Activated T-helper 2 cell treated with anti-CD3 and anti-CD28 coated beads, Interferon-gamma antibody, Interleukin-2, Interleukin-4, amounts not matched to agents 10 μg/mL and 5 μg/mL and 100 μg/mL, durations not matched to agents 14 hours and 24 hours and 36 hours (primary cell): ENCODE measurements at regions of chrX and their contacts with region 1.

Region 1: DNA sequence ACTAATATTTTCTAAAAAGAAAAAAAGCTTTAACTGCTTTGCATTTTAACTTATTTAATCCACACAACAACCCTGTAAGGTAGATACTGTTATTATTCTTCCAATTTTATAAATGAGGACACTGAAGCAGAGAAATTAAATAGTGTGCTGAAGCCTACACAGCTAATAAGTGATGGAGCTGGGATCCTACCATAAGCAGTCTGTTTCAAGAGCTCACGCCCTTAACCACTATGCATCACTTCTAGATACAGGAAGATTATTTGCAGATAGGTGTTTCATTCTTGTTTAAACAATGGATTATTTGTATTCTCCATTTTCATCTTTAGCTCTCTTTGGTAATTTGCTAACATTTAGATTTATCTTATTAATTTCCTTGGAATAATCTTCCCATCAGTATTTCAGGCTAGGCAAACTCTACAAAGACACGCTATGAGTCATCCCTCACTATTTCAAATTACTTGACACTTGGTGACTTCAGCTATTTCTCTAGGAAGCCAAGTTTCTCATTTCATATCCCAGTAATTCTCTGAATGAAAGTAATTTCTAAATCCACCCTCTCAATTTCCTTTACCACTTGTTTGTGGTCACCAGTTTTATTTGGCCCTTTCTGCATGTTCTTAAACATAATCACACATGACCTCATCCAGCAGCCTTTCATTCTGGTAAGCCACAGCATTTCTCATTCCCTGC is 67.3 kb downstream of the ASB9 start:
- DNase-seq: no peak
- H3K4me3 Mint-ChIP-seq: no peak overlapping the region
- H3K27ac Mint-ChIP-seq: no peak overlapping the region
- H3K4me1 Mint-ChIP-seq: peaks cover 30% of the 10 kb centered on the region
- H3K27me3 Mint-ChIP-seq: peaks cover 9% of the 10 kb centered on the region

Region 2: GRCh38 chrX:14798805-14799397 is 403.7 kb before region 1 on chrX:
- intact Hi-C with region 1: loop called (anchors 5 kb)
- DNase-seq: no peak
- H3K4me3 Mint-ChIP-seq: no peak overlapping the region
- H3K27ac Mint-ChIP-seq: no peak overlapping the region
- H3K4me1 Mint-ChIP-seq: peaks cover 5% of the 10 kb centered on the region
- H3K27me3 Mint-ChIP-seq: no peaks in the 10 kb centered on the region

Region 3: DNA sequence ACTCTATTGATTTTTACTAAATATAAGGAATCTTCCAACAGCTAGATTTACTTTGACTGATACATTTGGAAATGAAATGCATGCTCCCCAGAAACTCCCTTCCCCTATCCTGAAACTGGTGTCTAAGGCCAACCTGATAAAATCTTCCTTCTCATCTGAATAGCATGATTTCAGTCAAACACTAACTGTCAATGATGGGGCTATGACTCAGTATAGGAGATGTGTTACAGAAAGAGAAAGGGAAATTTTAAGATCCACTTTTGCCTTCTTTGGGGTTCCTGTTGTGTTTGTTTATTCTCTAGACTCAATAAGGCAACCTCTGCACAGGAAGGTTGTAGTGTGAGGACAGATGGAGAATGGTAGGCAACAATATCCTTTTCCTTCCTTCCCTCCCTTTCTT is 168.7 kb before region 1 on chrX:
- intact Hi-C with region 1: loop called (anchors 2 kb)
- DNase-seq: no peak
- H3K4me3 Mint-ChIP-seq: no peak overlapping the region
- H3K27ac Mint-ChIP-seq: no peak overlapping the region
- H3K4me1 Mint-ChIP-seq: peaks cover 11% of the 10 kb centered on the region
- H3K27me3 Mint-ChIP-seq: no peaks in the 10 kb centered on the region

Region 4: DNA sequence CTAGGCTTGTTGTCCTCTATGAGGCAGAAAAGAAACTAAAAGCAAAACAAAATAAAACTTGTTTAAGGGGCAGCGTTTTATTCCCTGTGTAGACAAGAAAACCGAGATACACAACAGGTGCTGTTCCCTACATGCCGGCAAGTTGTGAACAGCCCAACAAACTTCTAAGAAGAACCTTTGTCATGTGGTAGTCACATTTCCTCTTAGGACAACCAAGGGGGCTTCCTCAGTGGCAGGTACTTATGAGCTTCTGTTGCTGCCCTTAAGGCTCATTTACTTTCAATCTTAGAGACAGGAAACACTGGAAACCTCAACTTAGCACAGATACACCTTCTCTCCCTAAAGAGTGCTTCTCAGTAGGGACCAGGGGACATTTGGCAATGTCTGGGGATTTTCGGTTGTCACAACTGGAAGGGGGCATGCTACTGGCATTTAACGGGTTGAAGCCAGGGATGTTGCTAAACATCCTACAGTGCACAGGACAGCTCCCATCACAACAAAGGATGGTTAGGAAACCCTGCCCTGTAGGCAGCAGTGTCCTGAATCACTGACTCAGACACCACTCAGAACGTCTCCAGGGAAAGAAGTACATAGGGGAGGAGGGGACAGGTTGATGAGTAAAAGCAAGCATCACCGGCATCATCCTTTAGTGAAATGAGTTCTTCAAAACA is 43.7 kb before region 1 on chrX:
- intact Hi-C with region 1: loop called (anchors 1 kb)
- DNase-seq: peak; percentile 8
- H3K4me3 Mint-ChIP-seq: peak overlapping the region; percentile 78
- H3K27ac Mint-ChIP-seq: peak overlapping the region; percentile 86
- H3K4me1 Mint-ChIP-seq: peaks cover 23% of the 10 kb centered on the region
- H3K27me3 Mint-ChIP-seq: peaks cover 4% of the 10 kb centered on the region

Region 5: GRCh38 chrX:15413101-15413500 is 210.5 kb after region 1 on chrX:
- intact Hi-C with region 1: no loop called
- DNase-seq: no peak
- H3K4me3 Mint-ChIP-seq: no peak overlapping the region
- H3K27ac Mint-ChIP-seq: no peak overlapping the region
- H3K4me1 Mint-ChIP-seq: peaks cover 7% of the 10 kb centered on the region
- H3K27me3 Mint-ChIP-seq: no peaks in the 10 kb centered on the region